ENCODE measurements at regions of chr10 and their contacts with region 1.

Region 1: DNA sequence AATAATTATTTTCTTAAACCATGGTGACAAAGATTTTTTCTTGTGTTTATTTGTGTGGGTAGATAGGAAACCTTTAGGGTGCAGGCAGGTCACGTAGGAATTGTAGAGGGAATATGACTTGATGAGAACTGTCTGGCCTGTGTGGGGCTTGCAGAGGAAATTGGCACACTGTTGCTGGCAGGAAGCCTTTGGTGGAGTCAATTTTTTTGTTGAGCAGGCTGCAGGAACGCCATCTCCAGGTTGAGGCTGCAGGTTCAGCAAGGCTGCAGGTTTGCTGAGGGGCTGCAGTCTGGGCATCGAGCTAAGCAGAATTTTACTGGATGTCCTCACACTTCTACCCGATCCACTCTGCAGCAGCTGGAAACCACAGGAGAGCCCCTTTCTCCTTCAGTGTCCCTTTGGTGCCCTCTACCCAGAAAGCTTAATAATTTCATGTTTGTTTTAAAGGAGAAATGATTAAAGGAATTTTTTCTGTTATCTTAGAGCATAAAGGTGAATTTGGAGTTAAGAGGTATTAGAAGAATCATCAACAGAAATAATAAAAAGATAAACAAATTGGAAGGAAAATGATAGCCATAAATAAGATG is 37.0 kb downstream of the TBC1D12 start:
- DNase-seq: no peak
- ATAC-seq: no peak
- H3K4me3 ChIP-seq: no peak overlapping the region
- H3K27ac ChIP-seq: no peak overlapping the region
- H3K4me1 ChIP-seq: no peaks in the 10 kb centered on the region
- H3K27me3 ChIP-seq: no peaks in the 10 kb centered on the region
- CTCF ChIP-seq: no peak
- EP300 ChIP-seq: no peak
- POLR2A ChIP-seq: no peak
- RAD21 ChIP-seq: no peak

Region 2: DNA sequence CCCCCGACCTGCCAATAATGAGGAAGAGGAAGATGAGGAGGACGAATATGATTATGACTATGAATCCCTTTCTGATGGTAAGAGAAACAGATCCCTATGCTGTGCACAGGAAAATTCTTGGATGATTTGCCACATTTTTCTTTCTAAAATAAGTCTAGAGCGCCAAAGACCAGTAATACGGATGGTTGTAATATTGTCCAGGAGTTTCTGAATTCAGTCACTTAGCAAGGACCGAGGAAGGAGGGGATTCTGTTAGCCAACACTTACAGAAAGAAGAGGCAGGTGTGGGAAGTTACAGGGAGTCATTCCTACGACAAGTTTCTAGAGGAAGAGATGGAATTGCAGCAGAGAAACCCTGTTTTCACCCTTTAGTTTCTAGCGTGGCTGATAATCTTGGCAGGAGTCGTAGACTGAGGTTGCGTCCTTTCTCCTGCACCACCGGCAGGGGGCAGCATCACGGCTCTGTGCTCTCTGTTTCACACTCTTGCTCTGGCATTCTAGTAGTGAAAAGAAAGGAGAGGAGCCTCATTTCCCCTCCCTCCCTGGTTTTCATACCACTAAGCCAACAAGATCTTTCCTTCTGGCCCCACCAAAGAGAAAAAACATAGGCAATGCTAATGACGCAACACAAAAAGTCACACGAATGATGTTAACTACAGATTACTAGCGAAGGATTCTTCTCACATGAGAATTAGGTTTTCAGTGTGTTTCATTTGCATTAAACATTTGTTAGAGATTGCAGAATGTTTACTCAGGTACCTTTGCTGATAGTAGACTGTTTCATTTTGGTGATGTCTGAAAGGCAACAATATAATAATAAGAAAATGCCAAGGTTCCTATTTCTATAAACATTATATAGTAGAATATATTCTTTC is 159.3 kb before region 1 on chr10:
- CTCF ChIA-PET with region 1: interaction called, 58 read pairs
- POLR2A ChIA-PET with region 1: no interaction called
- RAD21 ChIA-PET with region 1: interaction called, 10 read pairs
- SMC1A ChIA-PET with region 1: interaction called, 18 read pairs
- in situ Hi-C with region 1: no loop called
- intact Hi-C with region 1: loop called (anchors 1 kb)
- DNase-seq: peak; percentile 11
- ATAC-seq: peak; percentile 94
- H3K4me3 ChIP-seq: no peak overlapping the region
- H3K27ac ChIP-seq: no peak overlapping the region
- H3K4me1 ChIP-seq: no peaks in the 10 kb centered on the region
- H3K27me3 ChIP-seq: 0 out of 4 replicates have a peak, but pooled peaks cover 0 to 3% of the 10 kb centered on the region in 2 experiments
- CTCF ChIP-seq: peak; percentile 82 to 96 (median 88)
- EP300 ChIP-seq: no peak
- POLR2A ChIP-seq: no peak
- RAD21 ChIP-seq: peak; percentile 64

Region 3: GRCh38 chr10:94315024-94315451 is 124.3 kb before region 1 on chr10:
- CTCF ChIA-PET with region 1: interaction called, 68 read pairs
- POLR2A ChIA-PET with region 1: no interaction called
- RAD21 ChIA-PET with region 1: interaction called, 21 read pairs
- SMC1A ChIA-PET with region 1: interaction called, 17 read pairs
- in situ Hi-C with region 1: no loop called
- intact Hi-C with region 1: no loop called
- DNase-seq: no peak
- ATAC-seq: no peak
- H3K4me3 ChIP-seq: no peak overlapping the region
- H3K27ac ChIP-seq: no peak overlapping the region
- H3K4me1 ChIP-seq: no peaks in the 10 kb centered on the region
- H3K27me3 ChIP-seq: no peaks in the 10 kb centered on the region
- CTCF ChIP-seq: no peak
- EP300 ChIP-seq: no peak
- POLR2A ChIP-seq: no peak
- RAD21 ChIP-seq: no peak

Region 4: GRCh38 chr10:94344522-94345122 is 94.7 kb before region 1 on chr10:
- CTCF ChIA-PET with region 1: interaction called, 13 read pairs
- POLR2A ChIA-PET with region 1: no interaction called
- RAD21 ChIA-PET with region 1: interaction called, 6 read pairs
- SMC1A ChIA-PET with region 1: interaction called, 14 read pairs
- in situ Hi-C with region 1: no loop called
- intact Hi-C with region 1: no loop called
- DNase-seq: peak; percentile 58
- ATAC-seq: peak; percentile 95
- H3K4me3 ChIP-seq: peak overlapping the region; percentile 16; the same call in 1 of the 2 replicates
- H3K27ac ChIP-seq: peak overlapping the region; percentile 73
- H3K4me1 ChIP-seq: peaks cover 9% of the 10 kb centered on the region
- H3K27me3 ChIP-seq: no peaks in the 10 kb centered on the region
- CTCF ChIP-seq: no peak
- EP300 ChIP-seq: peak in 1 of 2 experiments; percentile 68
- POLR2A ChIP-seq: no peak
- RAD21 ChIP-seq: no peak

Region 5: GRCh38 chr10:94362360-94363250 is 76.8 kb before region 1 on chr10 and contains the start of gene NOC3L:
- CTCF ChIA-PET with region 1: interaction called, 28 read pairs
- POLR2A ChIA-PET with region 1: no interaction called
- RAD21 ChIA-PET with region 1: interaction called, 8 read pairs
- SMC1A ChIA-PET with region 1: interaction called, 5 read pairs
- in situ Hi-C with region 1: no loop called
- intact Hi-C with region 1: loop called (anchors 5 kb)
- DNase-seq: peak; percentile 76
- ATAC-seq: peak; percentile 98
- H3K4me3 ChIP-seq: peak within 1 kb of the TSS; percentile 71
- H3K27ac ChIP-seq: peak within 1 kb of the TSS; percentile 85
- H3K4me1 ChIP-seq: peaks cover 4% of the 10 kb centered on the region; the same call in 1 of the 2 replicates
- H3K27me3 ChIP-seq: no peaks in the 10 kb centered on the region
- CTCF ChIP-seq: peak; percentile 63 to 87 (median 74); a peak in 5 of 6 replicates
- EP300 ChIP-seq: 0 out of 4 replicates have a peak, but pooled peaks of 1 of the 2 experiments have one; percentile 11
- POLR2A ChIP-seq: peak; percentile 87
- RAD21 ChIP-seq: 0 out of 2 replicates have a peak, but pooled peaks have one; percentile 21
- polyA plus RNA-seq, gene NOC3L: 37.7 to 38.2 TPM

Region 6: GRCh38 chr10:94412449-94412848 is 26.9 kb before region 1 on chr10:
- CTCF ChIA-PET with region 1: interaction called, 15 read pairs
- POLR2A ChIA-PET with region 1: no interaction called
- RAD21 ChIA-PET with region 1: interaction called, 14 read pairs
- SMC1A ChIA-PET with region 1: interaction called, 17 read pairs
- in situ Hi-C with region 1: no loop called
- intact Hi-C with region 1: no loop called
- DNase-seq: no peak
- ATAC-seq: no peak
- H3K4me3 ChIP-seq: no peak overlapping the region
- H3K27ac ChIP-seq: no peak overlapping the region
- H3K4me1 ChIP-seq: no peaks in the 10 kb centered on the region
- H3K27me3 ChIP-seq: no peaks in the 10 kb centered on the region
- CTCF ChIP-seq: no peak
- EP300 ChIP-seq: no peak
- POLR2A ChIP-seq: no peak
- RAD21 ChIP-seq: no peak

Region 7: DNA sequence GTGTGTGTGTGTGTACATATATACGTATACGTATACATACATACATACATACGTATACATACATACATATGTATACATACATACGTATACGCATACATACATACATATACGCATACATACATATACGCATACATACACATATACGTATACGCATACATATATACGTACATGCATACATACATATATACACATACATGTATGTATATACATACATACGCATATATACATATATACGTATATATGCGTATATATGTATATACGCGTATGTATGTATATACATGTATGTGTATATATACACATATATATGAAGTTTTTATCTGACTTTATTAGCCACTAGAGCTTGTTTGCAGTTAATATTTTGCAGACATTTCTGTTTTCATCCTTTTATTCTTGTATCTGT is 26.3 kb after region 1 on chr10:
- CTCF ChIA-PET with region 1: interaction called, 13 read pairs
- POLR2A ChIA-PET with region 1: no interaction called
- RAD21 ChIA-PET with region 1: no interaction called
- SMC1A ChIA-PET with region 1: no interaction called
- in situ Hi-C with region 1: no loop called
- intact Hi-C with region 1: no loop called
- DNase-seq: no peak
- ATAC-seq: no peak
- H3K4me3 ChIP-seq: no peak overlapping the region
- H3K27ac ChIP-seq: no peak overlapping the region
- H3K4me1 ChIP-seq: no peaks in the 10 kb centered on the region
- H3K27me3 ChIP-seq: no peaks in the 10 kb centered on the region
- CTCF ChIP-seq: no peak
- EP300 ChIP-seq: no peak
- POLR2A ChIP-seq: no peak
- RAD21 ChIP-seq: no peak

Region 8: GRCh38 chr10:94706089-94706488 is 266.7 kb after region 1 on chr10:
- CTCF ChIA-PET with region 1: no interaction called
- POLR2A ChIA-PET with region 1: no interaction called
- RAD21 ChIA-PET with region 1: no interaction called
- SMC1A ChIA-PET with region 1: no interaction called
- in situ Hi-C with region 1: no loop called
- intact Hi-C with region 1: no loop called
- DNase-seq: no peak
- ATAC-seq: no peak
- H3K4me3 ChIP-seq: no peak overlapping the region
- H3K27ac ChIP-seq: no peak overlapping the region
- H3K4me1 ChIP-seq: no peaks in the 10 kb centered on the region
- H3K27me3 ChIP-seq: no peaks in the 10 kb centered on the region
- CTCF ChIP-seq: no peak
- EP300 ChIP-seq: no peak
- POLR2A ChIP-seq: no peak
- RAD21 ChIP-seq: no peak

Measured in GM12878 (cell line).